ENCODE measurements at regions of chr19 and their contacts with region 1.

Region 1: GRCh38 chr19:4909897-4910593 is 744 bp downstream of the UHRF1 start:
- DNase-seq: peak; percentile 42
- H3K4me3 ChIP-seq: peak overlapping the region; percentile 67
- H3K27ac ChIP-seq: peak overlapping the region; percentile 94
- H3K27me3 ChIP-seq: no peaks in the 10 kb centered on the region
- CTCF ChIP-seq: no peak

Region 2: GRCh38 chr19:4676955-4677731 is 232.9 kb before region 1 on chr19:
- CTCF ChIA-PET with region 1: no interaction called
- POLR2A ChIA-PET with region 1: no interaction called
- DNase-seq: no peak
- H3K4me3 ChIP-seq: no peak overlapping the region
- H3K27ac ChIP-seq: no peak overlapping the region
- H3K27me3 ChIP-seq: no peaks in the 10 kb centered on the region
- CTCF ChIP-seq: peak; percentile 49

Region 3: DNA sequence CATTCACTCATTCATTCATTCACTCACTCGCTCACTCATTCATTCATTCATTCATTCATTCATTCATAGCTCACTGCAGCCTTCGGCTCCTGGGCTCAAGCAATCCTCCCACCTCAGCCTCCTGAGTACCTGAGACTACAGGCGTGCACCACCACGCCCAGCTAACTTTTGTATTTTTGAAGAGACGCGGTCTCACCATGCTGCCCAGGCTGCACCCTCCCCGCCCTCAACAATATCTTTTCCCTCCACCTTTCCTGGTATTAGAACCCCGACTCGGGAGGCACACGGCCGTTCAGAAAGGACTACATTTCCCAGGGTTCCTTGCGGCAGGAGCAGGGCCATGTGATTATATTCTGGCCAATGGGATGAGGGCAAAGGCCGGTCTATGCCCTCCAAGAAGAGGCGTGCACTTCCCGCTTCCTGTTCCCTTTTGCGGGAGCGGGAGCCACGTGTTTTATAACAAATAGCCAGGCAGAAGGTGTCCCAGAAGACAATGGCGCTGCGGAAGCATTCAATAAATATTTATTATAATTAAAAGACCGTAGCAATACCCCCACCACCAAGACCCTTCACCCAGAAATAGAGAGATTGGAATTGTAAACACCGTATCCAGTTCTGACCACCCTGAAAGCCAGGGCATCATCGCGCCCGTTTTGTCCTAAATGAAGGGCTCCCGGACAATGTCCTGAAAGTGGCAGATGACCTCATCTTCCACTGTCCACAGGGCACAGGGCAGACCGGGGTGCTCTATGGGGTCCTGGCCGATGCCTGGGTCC is 94.4 kb before region 1 on chr19:
- CTCF ChIA-PET with region 1: interaction called, 104 read pairs
- POLR2A ChIA-PET with region 1: interaction called, 19 read pairs
- DNase-seq: peak; percentile 74
- H3K4me3 ChIP-seq: no peak overlapping the region
- H3K27ac ChIP-seq: peak overlapping the region; percentile 21
- H3K27me3 ChIP-seq: no peaks in the 10 kb centered on the region
- CTCF ChIP-seq: no peak

Region 4: DNA sequence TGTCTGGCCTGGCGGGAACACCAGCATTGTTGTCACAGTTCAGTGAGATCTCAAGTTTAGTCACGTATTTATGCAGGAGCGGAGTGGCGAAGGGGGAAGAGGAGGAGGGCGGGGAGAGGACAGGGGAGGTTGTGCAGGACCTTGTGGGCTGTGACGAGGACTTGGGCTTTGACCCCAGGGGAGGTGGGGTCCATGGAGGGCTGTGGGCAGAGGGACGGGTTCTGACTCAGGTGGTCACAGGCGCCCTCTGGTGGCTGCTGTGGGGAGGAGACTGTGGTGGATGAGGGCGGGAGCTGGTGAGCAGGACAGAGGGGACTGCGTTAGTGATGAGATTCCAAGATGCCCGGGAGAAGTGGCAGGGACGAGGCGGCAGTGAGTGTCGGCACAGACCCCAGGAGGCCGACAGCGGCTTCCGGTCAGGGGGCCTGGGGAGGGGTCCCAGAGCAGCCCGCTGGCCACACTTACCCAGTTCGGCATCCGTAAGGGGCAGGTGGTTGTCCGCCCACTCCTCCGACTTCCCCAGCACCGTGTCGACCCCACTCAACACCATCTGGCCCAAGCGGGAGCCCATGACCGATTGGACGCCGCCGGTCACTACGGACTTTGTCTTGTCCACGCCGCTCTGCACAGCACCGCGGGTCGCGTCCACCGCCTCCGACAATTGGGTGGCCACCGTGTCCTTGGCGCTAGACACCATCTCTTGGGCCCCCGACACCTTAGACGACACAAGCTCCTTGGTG is 58.3 kb before region 1 on chr19:
- CTCF ChIA-PET with region 1: interaction called, 12 read pairs
- POLR2A ChIA-PET with region 1: interaction called, 3 read pairs
- DNase-seq: no peak
- H3K4me3 ChIP-seq: no peak overlapping the region
- H3K27ac ChIP-seq: no peak overlapping the region
- H3K27me3 ChIP-seq: no peaks in the 10 kb centered on the region
- CTCF ChIP-seq: peak; percentile 84

Region 5: GRCh38 chr19:4873930-4874329 is 36.1 kb before region 1 on chr19:
- CTCF ChIA-PET with region 1: interaction called, 22 read pairs
- POLR2A ChIA-PET with region 1: interaction called, 7 read pairs
- DNase-seq: no peak
- H3K4me3 ChIP-seq: no peak overlapping the region
- H3K27ac ChIP-seq: no peak overlapping the region
- H3K27me3 ChIP-seq: no peaks in the 10 kb centered on the region
- CTCF ChIP-seq: no peak

Region 6: GRCh38 chr19:5205381-5205780 is 295.3 kb after region 1 on chr19:
- CTCF ChIA-PET with region 1: no interaction called
- POLR2A ChIA-PET with region 1: no interaction called
- DNase-seq: no peak
- H3K4me3 ChIP-seq: no peak overlapping the region
- H3K27ac ChIP-seq: no peak overlapping the region
- H3K27me3 ChIP-seq: no peaks in the 10 kb centered on the region
- CTCF ChIP-seq: no peak